ENCODE measurements at regions of chr20 and their contacts with region 1.

Region 1: GRCh38 chr20:20083807-20084206 is 31.5 kb downstream of the CFAP61 start:
- DNase-seq: peak in 1 of 3 donors; percentile 11
- H3K4me3 ChIP-seq: no peak overlapping the region
- H3K4me3 Mint-ChIP-seq: peak overlapping the region; percentile 34 to 39
- H3K27ac ChIP-seq: no peak overlapping the region
- H3K27ac Mint-ChIP-seq: no peak overlapping the region
- H3K4me1 ChIP-seq: no peaks in the 10 kb centered on the region
- H3K4me1 Mint-ChIP-seq: peaks cover 7% of the 10 kb centered on the region
- H3K27me3 ChIP-seq: peaks cover 0 to 2% of the 10 kb centered on the region in 2 donors
- H3K27me3 Mint-ChIP-seq: peaks cover 3 to 6% (median 5%) of the 10 kb centered on the region in 3 donors
- CTCF ChIP-seq: peak; percentile 79

Region 2: GRCh38 chr20:20407891-20408805 is 324.3 kb after region 1 on chr20:
- intact Hi-C with region 1: loop called in 1 of 2 experiments (anchors 10 kb)
- DNase-seq: no peak
- H3K4me3 ChIP-seq: no peak overlapping the region
- H3K4me3 Mint-ChIP-seq: no peak overlapping the region
- H3K27ac ChIP-seq: no peak overlapping the region
- H3K27ac Mint-ChIP-seq: no peak overlapping the region
- H3K4me1 ChIP-seq: no peaks in the 10 kb centered on the region
- H3K4me1 Mint-ChIP-seq: no peaks in the 10 kb centered on the region
- H3K27me3 ChIP-seq: no peaks in the 10 kb centered on the region
- H3K27me3 Mint-ChIP-seq: no peaks in the 10 kb centered on the region
- CTCF ChIP-seq: peak; percentile 24

Region 3: GRCh38 chr20:20568604-20569205 is 484.9 kb after region 1 on chr20:
- intact Hi-C with region 1: loop called in 1 of 2 experiments (anchors 2 kb)
- DNase-seq: peak in 1 of 3 donors; percentile 6
- H3K4me3 ChIP-seq: no peak overlapping the region
- H3K4me3 Mint-ChIP-seq: no peak overlapping the region
- H3K27ac ChIP-seq: no peak overlapping the region
- H3K27ac Mint-ChIP-seq: no peak overlapping the region
- H3K4me1 ChIP-seq: no peaks in the 10 kb centered on the region
- H3K4me1 Mint-ChIP-seq: no peaks in the 10 kb centered on the region
- H3K27me3 ChIP-seq: no peaks in the 10 kb centered on the region
- H3K27me3 Mint-ChIP-seq: peaks cover 0 to 1% (median 0%) of the 10 kb centered on the region in 3 donors
- CTCF ChIP-seq: peak; percentile 56

Region 4: GRCh38 chr20:20593447-20594170 is 509.8 kb after region 1 on chr20:
- intact Hi-C with region 1: loop called in 1 of 2 experiments (anchors 10 kb)
- DNase-seq: no peak
- H3K4me3 ChIP-seq: no peak overlapping the region
- H3K4me3 Mint-ChIP-seq: no peak overlapping the region
- H3K27ac ChIP-seq: no peak overlapping the region
- H3K27ac Mint-ChIP-seq: peak overlapping the region in 1 of 7 donors; percentile 63
- H3K4me1 ChIP-seq: no peaks in the 10 kb centered on the region
- H3K4me1 Mint-ChIP-seq: no peaks in the 10 kb centered on the region
- H3K27me3 ChIP-seq: no peaks in the 10 kb centered on the region
- H3K27me3 Mint-ChIP-seq: peaks cover 0 to 2% (median 0%) of the 10 kb centered on the region in 3 donors
- CTCF ChIP-seq: peak; percentile 46

Measured in CD14-positive monocyte (primary cell).